Activated CD4-positive, alpha-beta memory T cell treated with anti-CD3 and anti-CD28 coated beads for 36 hours (primary cell): ENCODE measurements at regions of chr6 and their contacts with region 1.

Region 1: GRCh38 chr6:142819603-142820337 is 125.2 kb downstream of the HIVEP2 start:
- DNase-seq: peak; percentile 63
- H3K4me3 Mint-ChIP-seq: peak overlapping the region; percentile 79
- H3K27ac Mint-ChIP-seq: peak overlapping the region; percentile 97
- H3K4me1 Mint-ChIP-seq: peaks cover 77% of the 10 kb centered on the region
- H3K27me3 Mint-ChIP-seq: peaks cover 2% of the 10 kb centered on the region

Region 2: DNA sequence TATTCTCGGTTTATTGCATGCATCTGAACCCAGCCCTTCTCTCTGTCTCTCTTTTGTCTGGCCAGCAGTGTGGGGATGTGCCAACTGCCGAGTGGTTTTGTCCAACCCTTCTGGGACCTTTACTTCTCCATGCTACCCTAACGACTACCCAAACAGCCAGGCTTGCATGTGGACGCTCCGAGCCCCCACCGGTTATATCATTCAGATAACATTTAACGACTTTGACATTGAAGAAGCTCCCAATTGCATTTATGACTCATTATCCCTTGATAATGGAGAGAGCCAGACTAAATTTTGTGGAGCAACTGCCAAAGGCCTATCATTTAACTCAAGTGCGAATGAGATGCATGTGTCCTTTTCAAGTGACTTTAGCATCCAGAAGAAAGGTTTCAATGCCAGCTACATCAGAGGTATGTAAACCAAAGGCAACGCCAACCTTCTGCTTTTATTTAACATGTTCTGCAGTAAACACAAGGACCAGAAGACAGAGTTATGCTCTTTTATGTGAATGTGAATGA is 452.2 kb before region 1 on chr6:
- CTCF ChIA-PET with region 1: no interaction called
- POLR2A ChIA-PET with region 1: no interaction called
- intact Hi-C with region 1: no loop called
- DNase-seq: no peak
- H3K4me3 Mint-ChIP-seq: no peak overlapping the region
- H3K27ac Mint-ChIP-seq: no peak overlapping the region
- H3K4me1 Mint-ChIP-seq: no peaks in the 10 kb centered on the region
- H3K27me3 Mint-ChIP-seq: peaks cover 6% of the 10 kb centered on the region

Region 3: GRCh38 chr6:142728910-142729481 is 90.8 kb before region 1 on chr6:
- CTCF ChIA-PET with region 1: no interaction called
- POLR2A ChIA-PET with region 1: no interaction called
- intact Hi-C with region 1: no loop called
- DNase-seq: no peak
- H3K4me3 Mint-ChIP-seq: no peak overlapping the region
- H3K27ac Mint-ChIP-seq: no peak overlapping the region
- H3K4me1 Mint-ChIP-seq: peaks cover 18% of the 10 kb centered on the region
- H3K27me3 Mint-ChIP-seq: no peaks in the 10 kb centered on the region

Region 4: GRCh38 chr6:142773859-142774648 is 45.7 kb before region 1 on chr6:
- CTCF ChIA-PET with region 1: interaction called, 3 read pairs
- POLR2A ChIA-PET with region 1: interaction called, 9 read pairs
- intact Hi-C with region 1: loop called (anchors 1 kb)
- DNase-seq: peak; percentile 56
- H3K4me3 Mint-ChIP-seq: peak overlapping the region; percentile 62
- H3K27ac Mint-ChIP-seq: peak overlapping the region; percentile 93
- H3K4me1 Mint-ChIP-seq: peaks cover 62% of the 10 kb centered on the region
- H3K27me3 Mint-ChIP-seq: no peaks in the 10 kb centered on the region

Region 5: DNA sequence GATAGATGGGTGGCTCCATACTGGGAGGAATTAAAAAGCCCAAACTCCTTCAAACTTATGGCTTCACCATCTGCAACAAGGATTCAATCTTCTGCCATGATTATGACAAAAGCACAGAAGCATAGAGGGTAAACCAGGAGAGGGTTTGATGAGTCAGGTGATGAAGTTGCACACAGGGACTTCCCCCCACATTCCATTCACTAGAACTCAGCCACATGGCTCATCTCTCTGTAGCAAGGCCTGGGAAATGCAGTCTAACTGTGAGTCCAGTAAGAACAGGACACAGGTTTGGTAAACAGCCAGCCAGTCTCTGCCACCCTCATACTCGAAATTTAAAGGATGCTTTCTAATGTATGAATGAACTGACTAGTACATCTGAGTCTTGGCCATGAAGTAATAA is 17.6 kb before region 1 on chr6:
- CTCF ChIA-PET with region 1: interaction called, 11 read pairs
- POLR2A ChIA-PET with region 1: interaction called, 24 read pairs
- intact Hi-C with region 1: loop called (anchors 1 kb)
- DNase-seq: peak; percentile 77
- H3K4me3 Mint-ChIP-seq: no peak overlapping the region
- H3K27ac Mint-ChIP-seq: peak overlapping the region; percentile 79
- H3K4me1 Mint-ChIP-seq: peaks cover 95% of the 10 kb centered on the region
- H3K27me3 Mint-ChIP-seq: no peaks in the 10 kb centered on the region

Region 6: DNA sequence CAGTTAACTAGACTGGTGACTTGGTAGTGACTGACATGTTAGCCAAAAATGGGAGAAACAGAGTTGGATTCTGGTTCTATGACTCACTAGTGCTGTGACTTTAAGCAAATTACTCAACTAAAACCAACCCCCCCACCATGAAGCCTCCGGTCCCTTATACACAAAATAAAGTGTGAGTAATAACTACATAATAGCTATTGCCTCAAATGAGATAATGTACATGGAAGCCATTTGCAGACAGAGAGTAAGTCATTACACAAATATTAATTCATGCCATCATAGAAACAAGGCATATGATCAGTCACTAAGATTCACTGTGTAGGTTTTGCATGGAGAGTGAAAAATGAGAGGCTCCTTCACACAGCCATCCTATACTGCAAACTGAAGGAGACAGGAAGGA is 13.3 kb after region 1 on chr6:
- CTCF ChIA-PET with region 1: interaction called, 6 read pairs
- POLR2A ChIA-PET with region 1: interaction called, 8 read pairs
- intact Hi-C with region 1: loop called (anchors 1 kb)
- DNase-seq: peak; percentile 67
- H3K4me3 Mint-ChIP-seq: no peak overlapping the region
- H3K27ac Mint-ChIP-seq: peak overlapping the region; percentile 35
- H3K4me1 Mint-ChIP-seq: peaks cover 79% of the 10 kb centered on the region
- H3K27me3 Mint-ChIP-seq: no peaks in the 10 kb centered on the region

Region 7: GRCh38 chr6:142845624-142846458 is 26.1 kb after region 1 on chr6:
- CTCF ChIA-PET with region 1: interaction called, 9 read pairs
- POLR2A ChIA-PET with region 1: interaction called, 34 read pairs
- intact Hi-C with region 1: loop called (anchors 1 kb)
- DNase-seq: peak; percentile 65
- H3K4me3 Mint-ChIP-seq: peak overlapping the region; percentile 72
- H3K27ac Mint-ChIP-seq: peak overlapping the region; percentile 88
- H3K4me1 Mint-ChIP-seq: peaks cover 96% of the 10 kb centered on the region
- H3K27me3 Mint-ChIP-seq: no peaks in the 10 kb centered on the region

Region 8: DNA sequence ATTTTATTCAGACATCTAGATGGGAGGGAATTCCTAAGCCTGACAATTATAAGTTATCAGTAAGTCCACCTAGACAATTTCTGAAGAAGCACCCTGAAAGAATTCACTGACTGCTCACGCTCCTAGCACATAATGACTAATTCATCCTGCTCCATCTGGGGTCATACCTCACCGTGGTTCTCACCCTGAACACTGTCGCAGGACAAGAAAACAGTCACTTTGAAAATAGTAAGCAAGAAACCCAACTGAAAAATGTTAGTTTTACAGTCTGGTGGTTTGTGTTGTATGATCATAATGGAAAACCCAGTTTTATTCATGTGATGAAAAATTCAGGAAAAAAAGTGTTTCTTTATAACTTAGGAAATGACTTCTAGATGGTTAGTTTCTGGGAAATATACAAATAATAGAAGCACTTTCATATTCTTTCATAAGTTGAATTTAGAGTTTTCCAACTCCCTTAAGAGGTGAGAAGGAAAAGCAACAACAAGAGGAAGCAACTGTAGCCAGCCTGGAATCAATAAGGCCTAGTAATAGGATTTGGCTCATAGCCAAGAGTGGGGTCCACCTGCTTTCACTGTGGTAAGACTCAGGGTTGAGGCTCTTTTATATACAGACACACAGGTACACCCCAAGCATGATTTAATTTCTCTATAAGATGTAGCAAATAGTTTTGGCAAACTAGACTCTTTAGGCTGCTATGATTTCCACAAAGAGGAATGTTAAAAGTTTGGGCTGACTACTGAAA is 31.1 kb after region 1 on chr6:
- CTCF ChIA-PET with region 1: interaction called, 4 read pairs
- POLR2A ChIA-PET with region 1: interaction called, 12 read pairs
- intact Hi-C with region 1: loop called (anchors 1 kb)
- DNase-seq: peak; percentile 71
- H3K4me3 Mint-ChIP-seq: peak overlapping the region; percentile 58
- H3K27ac Mint-ChIP-seq: peak overlapping the region; percentile 94
- H3K4me1 Mint-ChIP-seq: peaks cover 97% of the 10 kb centered on the region
- H3K27me3 Mint-ChIP-seq: no peaks in the 10 kb centered on the region

Region 9: GRCh38 chr6:142857233-142857761 is 37.5 kb after region 1 on chr6:
- CTCF ChIA-PET with region 1: interaction called, 3 read pairs
- POLR2A ChIA-PET with region 1: interaction called, 12 read pairs
- intact Hi-C with region 1: loop called (anchors 1 kb)
- DNase-seq: no peak
- H3K4me3 Mint-ChIP-seq: peak overlapping the region; percentile 66
- H3K27ac Mint-ChIP-seq: peak overlapping the region; percentile 92
- H3K4me1 Mint-ChIP-seq: peaks cover 92% of the 10 kb centered on the region
- H3K27me3 Mint-ChIP-seq: no peaks in the 10 kb centered on the region

Region 10: DNA sequence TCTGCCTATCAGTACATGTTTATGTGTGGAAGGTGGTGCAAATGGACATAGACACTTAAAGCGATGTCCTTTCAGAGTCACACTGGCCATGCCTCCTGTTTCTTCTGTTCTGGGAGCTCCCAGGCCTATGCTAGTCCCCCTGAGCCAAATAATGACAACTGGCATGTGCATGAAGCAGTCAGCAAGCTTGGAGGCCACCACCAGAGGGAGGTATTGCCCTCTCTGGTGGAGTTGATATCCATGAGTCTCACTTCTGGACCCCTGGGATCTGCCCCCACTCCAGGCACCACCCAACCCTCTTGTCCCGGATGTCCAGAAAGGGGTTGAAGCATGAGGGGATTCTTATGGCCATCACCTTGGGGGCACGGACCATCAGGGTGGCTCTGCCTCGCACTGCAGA is 413.1 kb after region 1 on chr6:
- CTCF ChIA-PET with region 1: no interaction called
- POLR2A ChIA-PET with region 1: no interaction called
- intact Hi-C with region 1: no loop called
- DNase-seq: peak; percentile 46
- H3K4me3 Mint-ChIP-seq: no peak overlapping the region
- H3K27ac Mint-ChIP-seq: no peak overlapping the region
- H3K4me1 Mint-ChIP-seq: no peaks in the 10 kb centered on the region
- H3K27me3 Mint-ChIP-seq: no peaks in the 10 kb centered on the region